ENCODE measurements at regions of chr11 and their contacts with region 1.

Region 1: GRCh38 chr11:47176328-47177228 is at the start of gene ARFGAP2:
- DNase-seq: peak; percentile 98
- ATAC-seq: peak; percentile 84 to 89 (median 88)
- H3K4me3 ChIP-seq: peak within 1 kb of the TSS; percentile 94
- H3K27ac ChIP-seq: peak within 1 kb of the TSS; percentile 95
- H3K4me1 ChIP-seq: peaks cover 75% of the 10 kb centered on the region
- H3K27me3 ChIP-seq: no peaks in the 10 kb centered on the region
- CTCF ChIP-seq: no peak
- total RNA-seq, gene ARFGAP2: 80.2 to 138 (median 86.5) TPM

Region 2: GRCh38 chr11:47259178-47259977 is 82.8 kb after region 1 on chr11:
- intact Hi-C with region 1: loop called in 1 of 2 experiments (anchors 5 kb)
- DNase-seq: peak in 1 of 2 donors; percentile 54
- ATAC-seq: peak; percentile 50 to 62 (median 62)
- H3K4me3 ChIP-seq: peak overlapping the region; percentile 55
- H3K27ac ChIP-seq: peak overlapping the region; percentile 9
- H3K4me1 ChIP-seq: peaks cover 8% of the 10 kb centered on the region
- H3K27me3 ChIP-seq: no peaks in the 10 kb centered on the region
- CTCF ChIP-seq: peak; percentile 68

Measured in psoas muscle (tissue), 8 donors.